ENCODE measurements at regions of chr4 and their contacts with region 1.

Region 1: GRCh38 chr4:147590249-147590920 is 26.8 kb upstream of the TMEM184C start:
- DNase-seq: peak; percentile 64 to 77
- H3K4me3 ChIP-seq: no peak overlapping the region
- H3K27ac ChIP-seq: no peak overlapping the region
- H3K4me1 ChIP-seq: peaks cover 0 to 5% of the 10 kb centered on the region in 2 donors
- H3K27me3 ChIP-seq: no peaks in the 10 kb centered on the region
- CTCF ChIP-seq: peak; percentile 50 to 91 (median 72)
- POLR2A ChIP-seq: no peak

Region 2: DNA sequence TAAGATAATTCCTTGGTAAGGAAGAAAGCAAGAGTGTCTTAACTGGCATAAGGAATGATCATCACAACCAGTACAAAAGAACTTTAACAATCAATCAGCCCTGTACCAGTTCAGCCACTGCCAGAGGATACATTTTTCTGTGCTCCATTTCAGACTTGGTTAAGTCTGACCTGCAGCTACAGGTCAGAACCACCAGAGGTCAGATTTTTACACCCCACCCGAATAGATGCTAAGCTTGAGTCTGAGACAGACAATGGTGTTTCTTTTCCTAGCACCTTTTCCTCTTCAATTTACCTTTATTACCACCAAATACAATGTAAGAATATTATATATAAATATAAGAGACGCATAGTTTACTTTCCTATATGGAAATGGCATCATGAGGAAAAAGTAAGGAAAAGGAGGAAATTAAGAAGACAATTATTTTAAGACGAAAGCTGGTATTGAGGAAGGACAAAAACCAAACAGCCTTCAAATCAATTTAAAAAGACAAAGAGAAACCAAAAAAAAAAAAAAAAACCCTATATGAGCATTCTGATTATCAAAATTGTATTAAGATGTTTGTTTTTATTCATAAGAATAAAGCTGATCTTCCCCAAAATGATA is 429.4 kb before region 1 on chr4:
- intact Hi-C with region 1: loop called (anchors 10 kb)
- DNase-seq: peak; percentile 34 to 39
- H3K4me3 ChIP-seq: no peak overlapping the region
- H3K27ac ChIP-seq: no peak overlapping the region
- H3K4me1 ChIP-seq: peaks cover 0 to 14% of the 10 kb centered on the region in 2 donors
- H3K27me3 ChIP-seq: no peaks in the 10 kb centered on the region
- CTCF ChIP-seq: peak; percentile 39 to 85 (median 77)
- POLR2A ChIP-seq: no peak

Region 3: DNA sequence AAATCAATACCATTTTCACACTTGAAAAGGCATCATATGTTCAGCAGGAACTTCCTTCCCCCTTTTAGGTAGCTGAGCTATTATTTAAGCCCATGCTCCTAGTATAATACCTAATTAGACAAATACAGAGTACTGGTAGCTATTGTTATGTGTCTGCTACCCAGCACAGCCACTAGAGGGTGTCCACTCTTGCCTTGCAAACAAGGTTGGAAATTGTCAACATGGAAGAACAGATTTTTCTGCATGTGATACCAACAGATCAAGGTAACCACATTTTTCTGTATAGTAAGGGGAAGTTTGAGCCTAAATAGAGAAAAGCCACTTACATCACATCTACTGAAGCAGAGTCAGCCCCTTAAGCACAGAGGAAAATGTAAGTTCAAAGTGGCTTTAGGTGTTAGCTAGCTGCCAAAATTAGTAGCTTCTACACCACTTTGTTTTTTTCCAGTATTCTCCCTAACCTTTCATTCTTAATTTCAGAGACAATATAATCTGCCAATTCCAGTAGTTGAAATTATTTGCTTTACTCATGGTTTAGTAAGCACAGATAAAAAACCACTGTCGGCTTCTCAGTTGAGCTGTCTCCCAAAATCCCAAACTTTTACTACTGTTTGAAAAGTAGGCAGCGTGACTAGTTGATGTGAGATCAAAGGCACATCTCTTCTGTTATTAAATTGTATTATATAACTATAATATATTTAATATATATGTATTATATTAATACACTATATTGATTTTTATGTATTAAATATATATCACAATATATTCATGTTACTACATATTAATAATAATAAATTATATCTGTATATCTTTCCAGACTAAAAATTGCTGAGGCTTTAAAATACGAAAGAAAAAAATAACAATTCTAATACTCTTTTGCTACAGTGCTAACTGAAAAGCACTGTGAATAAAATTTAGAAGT is 71.3 kb before region 1 on chr4:
- intact Hi-C with region 1: loop called (anchors 5 kb)
- DNase-seq: peak; percentile 74 to 81
- H3K4me3 ChIP-seq: no peak overlapping the region
- H3K27ac ChIP-seq: no peak overlapping the region
- H3K4me1 ChIP-seq: no peaks in the 10 kb centered on the region
- H3K27me3 ChIP-seq: no peaks in the 10 kb centered on the region
- CTCF ChIP-seq: peak; percentile 56 to 89 (median 82)
- POLR2A ChIP-seq: no peak

Region 4: DNA sequence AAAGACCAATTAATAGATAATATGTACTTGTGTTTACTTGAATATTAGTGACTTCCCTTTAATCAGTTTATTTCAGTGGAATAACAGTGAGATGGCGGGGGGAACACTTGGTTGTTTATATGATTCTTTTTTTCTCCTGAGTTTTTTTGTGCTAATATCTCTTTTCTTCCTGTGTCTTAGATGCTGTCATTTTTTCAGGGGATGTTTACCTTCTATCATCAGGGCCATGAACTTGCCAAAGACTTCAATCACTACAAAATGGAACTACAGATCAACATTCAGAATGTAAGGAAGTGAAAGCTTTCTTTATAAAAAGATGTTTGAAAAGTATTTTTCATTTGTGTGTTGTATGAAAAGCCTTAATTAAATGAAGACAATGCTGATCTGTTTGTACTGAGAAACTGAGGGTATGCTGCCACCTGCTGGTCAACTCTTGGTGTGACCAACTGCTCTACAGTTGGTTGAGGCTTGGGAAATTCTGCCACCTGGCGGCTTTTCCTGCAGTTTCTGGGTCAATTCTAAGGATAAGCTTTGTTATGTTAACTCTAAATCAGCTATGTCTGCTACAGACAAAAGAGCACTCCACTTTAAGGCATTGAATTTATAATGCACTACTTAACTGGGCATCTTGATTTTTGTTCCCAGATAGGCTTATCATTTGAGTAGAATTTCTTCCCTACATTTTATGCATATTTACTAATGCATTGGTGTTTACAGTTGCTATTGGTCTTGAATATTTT is 276.3 kb after region 1 on chr4:
- intact Hi-C with region 1: loop called (anchors 10 kb)
- DNase-seq: peak; percentile 96 to 98
- H3K4me3 ChIP-seq: no peak overlapping the region
- H3K27ac ChIP-seq: peak overlapping the region in 1 of 3 donors; percentile 30
- H3K4me1 ChIP-seq: peaks cover 0 to 3% of the 10 kb centered on the region in 2 donors
- H3K27me3 ChIP-seq: no peaks in the 10 kb centered on the region
- CTCF ChIP-seq: peak; percentile 91 to 100 (median 98)
- POLR2A ChIP-seq: no peak

Measured in thyroid gland (tissue), 4 donors.